Kidney (tissue), 22 donors: ENCODE measurements at regions of chr17 and their contacts with region 1.

Region 1: GRCh38 chr17:50094753-50095619 is at the start of gene PDK2:
- DNase-seq: peak; percentile 97 to 99 (median 97)
- H3K4me3 ChIP-seq: peak within 1 kb of the TSS; percentile 94 to 96 (median 95)
- H3K27ac ChIP-seq: peak within 1 kb of the TSS; percentile 85 to 90
- H3K4me1 ChIP-seq: peaks cover 0 to 31% (median 29%) of the 10 kb centered on the region in 3 donors
- H3K27me3 ChIP-seq: no peaks in the 10 kb centered on the region
- CTCF ChIP-seq: no peak
- total RNA-seq, gene PDK2: 41.9 TPM

Region 2: DNA sequence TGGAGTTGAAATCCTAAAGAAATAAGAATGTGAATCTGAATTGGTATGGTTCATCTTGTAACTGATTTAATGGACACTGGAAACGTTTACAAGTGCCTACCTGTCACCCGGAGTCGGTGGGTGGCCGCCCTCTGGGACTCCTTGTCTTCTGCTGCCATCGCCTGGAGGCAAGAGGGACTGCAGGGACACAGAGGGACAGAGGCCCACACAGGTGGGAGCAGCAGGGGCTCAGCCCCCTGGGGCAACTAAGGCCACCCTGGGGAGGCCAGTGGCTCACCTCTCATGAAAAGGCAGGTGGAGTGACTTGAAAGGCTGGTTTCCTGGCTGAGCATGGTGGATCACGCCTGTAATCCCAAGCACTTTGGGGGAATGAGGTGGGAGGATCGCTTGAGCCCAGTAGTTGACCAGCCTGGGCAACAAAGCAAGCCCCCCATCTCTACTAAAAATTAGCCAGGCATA is 202.4 kb after region 1 on chr17:
- intact Hi-C with region 1: loop called (anchors 10 kb)
- DNase-seq: peak; percentile 65 to 92 (median 90)
- H3K4me3 ChIP-seq: no peak overlapping the region
- H3K27ac ChIP-seq: no peak overlapping the region
- H3K4me1 ChIP-seq: no peaks in the 10 kb centered on the region
- H3K27me3 ChIP-seq: no peaks in the 10 kb centered on the region
- CTCF ChIP-seq: peak; percentile 95